Motor neuron (in vitro differentiated cells): ENCODE measurements at regions of chr12 and their contacts with region 1.

Region 1: GRCh38 chr12:100668945-100669536 is 95.6 kb downstream of the GAS2L3 start:
- ATAC-seq: peak; percentile 57 to 97 (median 78)
- H3K4me3 ChIP-seq: no peak overlapping the region
- H3K27ac ChIP-seq: no peak overlapping the region
- H3K4me1 ChIP-seq: no peaks in the 10 kb centered on the region

Region 2: DNA sequence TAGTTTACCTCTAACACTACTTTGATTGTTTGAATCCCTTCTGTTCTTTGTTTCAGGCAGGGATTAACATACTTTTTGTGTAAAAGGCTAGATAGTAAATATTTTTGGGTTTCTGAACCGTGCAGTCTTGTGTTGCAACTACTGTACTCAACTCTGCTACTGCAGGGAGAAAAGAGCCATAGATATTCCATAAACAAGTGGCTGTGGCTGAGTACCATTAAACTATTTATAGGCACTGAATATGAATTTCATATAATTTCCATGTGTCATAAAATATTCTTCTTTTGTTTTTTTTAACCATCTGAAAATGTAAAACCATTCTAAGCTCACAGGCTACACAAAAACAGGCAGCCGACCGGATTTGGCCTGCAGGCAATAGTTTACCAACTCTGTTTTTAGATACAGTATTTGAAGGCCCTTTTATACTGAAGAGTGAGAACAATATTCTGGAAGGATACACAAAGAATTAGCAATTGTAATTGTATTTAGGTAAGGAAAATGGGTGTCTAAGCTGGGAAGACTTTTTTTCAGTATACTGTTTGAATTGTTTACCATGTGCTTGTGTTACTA is 179.7 kb before region 1 on chr12:
- in situ Hi-C with region 1: no loop called
- ATAC-seq: peak in 2 of 8 experiments; percentile 48 to 87
- H3K4me3 ChIP-seq: no peak overlapping the region
- H3K27ac ChIP-seq: no peak overlapping the region
- H3K4me1 ChIP-seq: no peaks in the 10 kb centered on the region

Region 3: GRCh38 chr12:100733817-100734593 is 65.0 kb after region 1 on chr12:
- in situ Hi-C with region 1: loop called in 1 of 9 experiments (anchors 5 kb)
- ATAC-seq: peak in 4 of 8 experiments; percentile 36 to 50 (median 46)
- H3K4me3 ChIP-seq: no peak overlapping the region
- H3K27ac ChIP-seq: no peak overlapping the region
- H3K4me1 ChIP-seq: no peaks in the 10 kb centered on the region